ENCODE measurements at regions of chr16 and their contacts with region 1.

Region 1: DNA sequence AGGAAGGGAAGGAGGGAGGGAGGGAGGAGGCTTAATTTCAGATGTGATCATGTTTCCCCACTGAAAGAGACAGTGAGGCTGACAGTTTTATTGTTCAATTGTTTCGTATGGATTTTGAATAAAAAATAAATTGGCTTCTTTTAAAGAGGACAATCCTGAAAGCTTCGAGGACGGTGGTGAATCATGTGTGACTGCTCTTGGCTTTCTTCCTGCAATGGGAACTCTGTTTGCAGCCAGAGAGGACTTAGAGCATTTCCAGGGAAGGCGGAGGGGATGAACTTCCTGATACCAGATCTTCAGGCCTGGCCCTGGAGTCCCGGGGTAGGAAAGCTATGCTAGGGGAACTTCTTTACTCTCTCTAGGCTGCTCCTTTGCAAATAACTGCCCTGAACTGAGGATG is 72.8 kb upstream of the C16orf82 start:
- DNase-seq: no peak
- ATAC-seq: no peak
- H3K4me3 ChIP-seq: no peak overlapping the region
- H3K27ac ChIP-seq: no peak overlapping the region
- H3K4me1 ChIP-seq: no peaks in the 10 kb centered on the region
- H3K27me3 ChIP-seq: peaks cover 0 to 10% (median 0%) of the 10 kb centered on the region in 9 donors
- CTCF ChIP-seq: no peak
- POLR2A ChIP-seq: no peak

Region 2: GRCh38 chr16:27040732-27041131 is 46.8 kb after region 1 on chr16:
- intact Hi-C with region 1: loop called in 1 of 10 experiments (anchors 5 kb)
- DNase-seq: no peak
- ATAC-seq: no peak
- H3K4me3 ChIP-seq: no peak overlapping the region
- H3K27ac ChIP-seq: no peak overlapping the region
- H3K4me1 ChIP-seq: no peaks in the 10 kb centered on the region
- H3K27me3 ChIP-seq: peaks cover 0 to 6% (median 0%) of the 10 kb centered on the region in 9 donors
- CTCF ChIP-seq: no peak
- POLR2A ChIP-seq: no peak